Activated T-helper 1 cell treated with anti-CD3 and anti-CD28 coated beads, Interleukin-12 subunit alpha, Interleukin-12 subunit beta, Interleukin-2, Interleukin-4 antibody, amounts not matched to agents 30 ng/mL and 10 ng/mL and 1 ng/mL, durations not matched to agents 14 hours and 24 hours and 36 hours (primary cell): ENCODE measurements at regions of chr5 and their contacts with region 1.

Region 1: DNA sequence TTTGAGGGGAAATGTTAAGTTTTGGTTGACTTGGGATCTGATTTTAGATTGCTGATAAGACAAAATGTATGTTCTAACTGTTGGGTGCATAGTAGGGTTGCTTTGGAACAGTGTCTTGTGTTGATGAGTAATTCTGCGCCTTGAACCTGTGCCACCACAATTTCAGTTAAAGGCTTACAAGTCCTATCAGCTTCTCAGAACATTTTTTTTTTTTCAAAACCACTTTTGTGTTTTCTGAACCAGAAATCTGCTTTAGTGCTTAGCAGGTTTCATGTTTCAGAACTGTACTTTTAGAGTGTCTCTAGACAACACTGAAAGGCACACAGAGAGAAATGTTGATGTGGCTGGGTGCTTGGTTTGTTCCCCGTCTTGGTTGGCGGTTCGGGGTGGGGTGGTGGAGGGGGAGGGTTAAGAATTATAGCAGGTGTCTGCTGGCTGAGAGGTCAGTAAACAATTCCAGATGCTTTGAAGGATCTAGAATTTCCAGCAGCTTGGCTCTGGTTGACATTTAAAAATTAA is 84.6 kb downstream of the ANKRD55 start:
- DNase-seq: peak; percentile 43
- H3K4me3 Mint-ChIP-seq: peak overlapping the region; percentile 23
- H3K27ac Mint-ChIP-seq: peak overlapping the region; percentile 81
- H3K4me1 Mint-ChIP-seq: peaks cover 60% of the 10 kb centered on the region
- H3K27me3 Mint-ChIP-seq: no peaks in the 10 kb centered on the region

Region 2: GRCh38 chr5:56012281-56012963 is 136.1 kb before region 1 on chr5:
- intact Hi-C with region 1: loop called (anchors 1 kb)
- DNase-seq: peak; percentile 21
- H3K4me3 Mint-ChIP-seq: peak overlapping the region; percentile 0
- H3K27ac Mint-ChIP-seq: peak overlapping the region; percentile 12
- H3K4me1 Mint-ChIP-seq: peaks cover 32% of the 10 kb centered on the region
- H3K27me3 Mint-ChIP-seq: no peaks in the 10 kb centered on the region

Region 3: DNA sequence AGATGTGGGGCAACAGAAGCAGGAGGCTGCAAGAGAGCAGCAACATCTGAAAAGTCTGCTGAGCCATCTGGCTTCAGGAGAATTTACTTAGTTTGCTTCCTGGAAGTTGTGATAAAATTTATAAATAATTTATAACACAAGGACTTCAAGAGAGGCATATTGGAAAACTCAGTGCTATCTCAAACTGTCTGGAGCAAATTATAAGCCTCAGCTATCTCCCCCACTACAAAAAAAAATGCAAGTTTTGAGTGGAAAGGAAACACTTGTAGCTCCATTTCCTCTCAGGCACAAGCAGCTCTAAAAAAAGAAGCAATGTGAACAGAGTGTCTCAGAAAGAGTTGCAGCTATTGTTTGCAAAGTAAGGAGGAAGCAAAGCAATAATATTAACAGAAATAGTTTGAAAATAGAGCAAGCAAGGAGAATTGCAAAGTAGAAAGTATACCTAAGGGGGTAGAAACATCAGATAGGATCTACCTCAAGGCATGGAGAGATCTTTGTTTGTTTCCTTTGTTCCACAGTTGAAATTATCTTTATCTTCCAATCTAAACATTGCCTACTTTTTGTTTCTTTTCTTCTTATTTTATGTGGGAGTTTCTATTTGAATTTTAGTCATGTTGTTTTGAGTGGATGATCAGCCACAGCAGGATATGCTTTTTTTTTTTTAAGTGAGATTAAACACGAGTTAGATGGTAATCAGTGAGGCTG is 97.8 kb before region 1 on chr5:
- intact Hi-C with region 1: loop called (anchors 2 kb)
- DNase-seq: no peak
- H3K4me3 Mint-ChIP-seq: peak overlapping the region; percentile 40
- H3K27ac Mint-ChIP-seq: peak overlapping the region; percentile 54
- H3K4me1 Mint-ChIP-seq: peaks cover 32% of the 10 kb centered on the region
- H3K27me3 Mint-ChIP-seq: peaks cover 6% of the 10 kb centered on the region

Region 4: GRCh38 chr5:56095579-56096102 is 52.9 kb before region 1 on chr5:
- intact Hi-C with region 1: loop called (anchors 2 kb)
- DNase-seq: no peak
- H3K4me3 Mint-ChIP-seq: peak overlapping the region; percentile 50
- H3K27ac Mint-ChIP-seq: peak overlapping the region; percentile 87
- H3K4me1 Mint-ChIP-seq: peaks cover 83% of the 10 kb centered on the region
- H3K27me3 Mint-ChIP-seq: no peaks in the 10 kb centered on the region

Region 5: DNA sequence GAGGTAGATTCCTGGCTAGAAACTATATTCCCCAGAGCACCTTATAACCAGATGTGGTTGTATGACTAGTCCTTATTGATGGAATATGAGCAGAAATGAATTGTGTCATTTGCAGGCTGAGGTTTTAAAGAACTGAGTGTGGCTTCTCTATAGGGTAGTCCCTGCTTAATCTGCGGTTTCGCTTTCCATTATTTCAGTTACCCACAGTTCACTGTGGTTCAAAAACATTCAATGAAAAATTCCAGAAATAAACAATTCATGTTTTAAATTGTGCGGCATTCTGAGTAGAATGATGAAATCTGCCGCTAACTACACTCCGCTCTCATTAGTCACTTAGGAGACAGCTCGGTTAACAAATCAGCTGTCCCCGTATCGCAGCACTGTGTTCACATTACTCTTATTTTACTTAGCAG is 19.6 kb after region 1 on chr5:
- intact Hi-C with region 1: loop called (anchors 1 kb)
- DNase-seq: no peak
- H3K4me3 Mint-ChIP-seq: no peak overlapping the region
- H3K27ac Mint-ChIP-seq: no peak overlapping the region
- H3K4me1 Mint-ChIP-seq: peaks cover 61% of the 10 kb centered on the region
- H3K27me3 Mint-ChIP-seq: peaks cover 3% of the 10 kb centered on the region